CD8-positive, alpha-beta T cell (primary cell): ENCODE measurements at regions of chr17 and their contacts with region 1.

Region 1: DNA sequence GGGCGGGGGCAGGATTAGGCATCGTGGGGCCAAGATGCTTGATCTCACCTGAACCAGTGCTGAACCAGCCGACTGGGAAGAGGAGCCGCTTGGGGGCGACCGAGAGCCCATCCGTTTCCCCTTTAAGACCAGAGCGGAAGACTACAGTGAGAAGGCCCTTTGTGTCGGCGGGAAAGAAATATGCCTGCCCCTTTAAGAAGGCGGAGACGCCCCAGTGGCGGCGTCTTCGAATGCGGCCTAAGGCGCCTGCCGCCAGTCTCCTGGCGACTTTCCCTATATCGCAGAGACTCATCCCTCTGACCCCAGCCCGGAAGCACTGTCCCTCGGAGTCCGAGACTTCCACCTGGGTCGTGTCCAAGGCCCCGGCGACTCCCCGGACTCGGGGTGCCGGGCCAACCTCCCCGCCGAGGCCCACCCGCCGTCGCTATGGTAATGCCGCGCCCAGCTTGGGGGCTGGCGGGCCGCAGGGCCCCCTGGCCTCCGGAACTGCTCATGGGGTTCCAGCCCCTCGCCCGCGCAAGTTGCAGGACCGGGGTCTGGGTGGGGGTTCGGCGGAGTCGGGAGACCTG is at the start of gene HROB:
- DNase-seq: peak; percentile 95 to 99 (median 98)
- ATAC-seq: peak; percentile 91
- H3K4me3 ChIP-seq: peak within 1 kb of the TSS; percentile 62 to 80
- H3K4me3 Mint-ChIP-seq: peak within 1 kb of the TSS; percentile 84
- H3K27ac ChIP-seq: peak within 1 kb of the TSS; percentile 49 to 78
- H3K27ac Mint-ChIP-seq: peak within 1 kb of the TSS; percentile 49
- H3K4me1 ChIP-seq: peaks cover 11% of the 10 kb centered on the region
- H3K4me1 Mint-ChIP-seq: peaks cover 10% of the 10 kb centered on the region
- H3K27me3 ChIP-seq: peaks cover 0 to 14% of the 10 kb centered on the region in 2 experiments
- H3K27me3 Mint-ChIP-seq: peaks cover 10% of the 10 kb centered on the region
- CTCF ChIP-seq: peak; percentile 75
- total RNA-seq, gene HROB: 4.0 to 4.9 TPM

Region 2: GRCh38 chr17:43952717-43953666 is 188.8 kb before region 1 on chr17:
- CTCF ChIA-PET with region 1: no interaction called
- POLR2A ChIA-PET with region 1: no interaction called
- intact Hi-C with region 1: no loop called
- DNase-seq: no peak
- ATAC-seq: no peak
- H3K4me3 ChIP-seq: no peak overlapping the region
- H3K4me3 Mint-ChIP-seq: peak overlapping the region; percentile 29
- H3K27ac ChIP-seq: no peak overlapping the region
- H3K27ac Mint-ChIP-seq: no peak overlapping the region
- H3K4me1 ChIP-seq: no peaks in the 10 kb centered on the region
- H3K4me1 Mint-ChIP-seq: no peaks in the 10 kb centered on the region
- H3K27me3 ChIP-seq: peaks cover 12 to 27% of the 10 kb centered on the region in 2 experiments
- H3K27me3 Mint-ChIP-seq: peaks cover 48% of the 10 kb centered on the region
- CTCF ChIP-seq: no peak

Region 3: DNA sequence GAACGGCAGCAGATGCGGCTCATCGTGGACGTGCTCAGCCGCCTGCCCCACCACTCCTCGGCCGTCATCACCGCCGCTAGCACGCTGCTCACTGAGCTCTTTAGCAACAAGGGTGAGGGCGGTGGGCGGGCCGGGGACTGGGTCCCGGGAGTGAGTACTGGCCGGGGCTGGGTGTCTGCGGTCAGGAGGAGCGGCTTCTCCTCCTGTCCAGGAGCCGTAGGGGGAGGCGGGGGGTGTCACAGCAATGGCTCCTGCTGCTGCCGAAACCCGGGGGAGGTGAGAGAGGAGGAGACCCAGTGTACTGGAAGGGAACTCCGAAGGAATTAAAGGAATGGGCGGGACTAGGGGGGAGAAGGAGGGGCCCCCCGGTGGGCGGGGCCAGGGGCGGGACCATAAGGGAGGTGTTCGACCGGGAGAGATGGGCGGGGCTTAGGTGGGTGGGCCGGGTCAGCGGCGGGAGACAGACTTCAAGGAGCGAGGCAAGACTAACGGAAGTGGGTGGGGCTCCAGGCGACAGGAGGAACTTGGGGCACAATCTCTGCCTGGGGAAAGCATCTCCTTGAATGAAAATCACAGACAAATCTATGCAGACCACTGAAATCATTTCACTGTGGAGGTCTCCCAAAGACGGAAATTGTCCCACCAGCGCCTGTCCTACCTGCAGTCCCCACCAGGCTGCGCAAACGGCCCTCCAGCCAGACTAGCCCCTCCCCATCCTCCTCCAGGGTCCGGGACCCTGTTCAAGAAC is 135.0 kb before region 1 on chr17:
- CTCF ChIA-PET with region 1: no interaction called
- POLR2A ChIA-PET with region 1: no interaction called
- intact Hi-C with region 1: loop called in 1 of 2 experiments (anchors 2 kb)
- DNase-seq: peak; percentile 91 to 99 (median 97)
- ATAC-seq: peak; percentile 88
- H3K4me3 ChIP-seq: peak overlapping the region; percentile 50 to 60
- H3K4me3 Mint-ChIP-seq: peak overlapping the region; percentile 88
- H3K27ac ChIP-seq: peak overlapping the region in 1 of 2 experiments; percentile 22
- H3K27ac Mint-ChIP-seq: no peak overlapping the region
- H3K4me1 ChIP-seq: peaks cover 30% of the 10 kb centered on the region
- H3K4me1 Mint-ChIP-seq: peaks cover 21% of the 10 kb centered on the region
- H3K27me3 ChIP-seq: peaks cover 0 to 17% of the 10 kb centered on the region in 2 experiments
- H3K27me3 Mint-ChIP-seq: peaks cover 5% of the 10 kb centered on the region
- CTCF ChIP-seq: no peak

Region 4: DNA sequence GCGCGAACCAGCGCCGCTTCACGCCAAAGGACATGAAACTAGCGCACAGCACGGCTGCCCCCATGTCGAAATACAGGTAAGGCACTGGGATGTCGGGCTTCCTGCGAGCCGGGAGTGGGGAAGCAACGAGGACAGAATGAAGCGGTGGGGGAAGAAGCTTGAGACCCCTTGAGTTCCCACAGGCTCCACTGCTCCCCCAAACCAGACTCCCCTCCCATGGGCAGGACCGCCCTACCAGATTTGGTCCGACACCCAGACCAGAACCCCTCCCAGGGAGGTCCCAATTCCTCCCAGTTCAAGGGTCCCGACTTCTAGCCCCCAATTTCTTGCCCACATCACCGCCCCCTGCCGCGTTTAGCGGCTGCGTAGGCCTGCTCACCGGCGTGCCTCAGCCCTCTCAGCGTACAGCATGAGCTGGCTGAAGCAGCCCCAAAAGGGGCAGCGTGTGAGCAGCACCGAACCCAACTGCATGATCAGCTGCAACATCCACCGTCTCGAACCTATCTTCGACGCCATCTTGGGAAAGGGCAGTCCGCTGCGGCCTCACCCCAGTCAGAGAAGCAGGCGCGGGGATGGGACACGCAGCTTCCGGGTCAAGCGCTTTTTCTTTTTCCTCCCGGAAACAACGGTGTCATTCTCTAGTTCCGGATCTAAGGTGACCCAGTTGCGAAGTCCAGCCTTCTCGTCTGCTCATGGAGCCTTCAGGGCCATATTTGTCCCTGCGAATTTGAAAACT is 127.2 kb before region 1 on chr17 and contains the start of gene TMEM101:
- CTCF ChIA-PET with region 1: no interaction called
- POLR2A ChIA-PET with region 1: no interaction called
- intact Hi-C with region 1: loop called in 1 of 2 experiments (anchors 2 kb)
- DNase-seq: peak; percentile 79 to 95 (median 90)
- ATAC-seq: peak; percentile 99
- H3K4me3 ChIP-seq: peak within 1 kb of the TSS; percentile 81 to 91
- H3K4me3 Mint-ChIP-seq: peak within 1 kb of the TSS; percentile 100
- H3K27ac ChIP-seq: peak within 1 kb of the TSS; percentile 51 to 55
- H3K27ac Mint-ChIP-seq: peak within 1 kb of the TSS; percentile 95
- H3K4me1 ChIP-seq: peaks cover 11% of the 10 kb centered on the region
- H3K4me1 Mint-ChIP-seq: peaks cover 10% of the 10 kb centered on the region
- H3K27me3 ChIP-seq: no peaks in the 10 kb centered on the region
- H3K27me3 Mint-ChIP-seq: no peaks in the 10 kb centered on the region
- CTCF ChIP-seq: no peak
- total RNA-seq, gene TMEM101: 8.1 to 8.7 TPM

Region 5: DNA sequence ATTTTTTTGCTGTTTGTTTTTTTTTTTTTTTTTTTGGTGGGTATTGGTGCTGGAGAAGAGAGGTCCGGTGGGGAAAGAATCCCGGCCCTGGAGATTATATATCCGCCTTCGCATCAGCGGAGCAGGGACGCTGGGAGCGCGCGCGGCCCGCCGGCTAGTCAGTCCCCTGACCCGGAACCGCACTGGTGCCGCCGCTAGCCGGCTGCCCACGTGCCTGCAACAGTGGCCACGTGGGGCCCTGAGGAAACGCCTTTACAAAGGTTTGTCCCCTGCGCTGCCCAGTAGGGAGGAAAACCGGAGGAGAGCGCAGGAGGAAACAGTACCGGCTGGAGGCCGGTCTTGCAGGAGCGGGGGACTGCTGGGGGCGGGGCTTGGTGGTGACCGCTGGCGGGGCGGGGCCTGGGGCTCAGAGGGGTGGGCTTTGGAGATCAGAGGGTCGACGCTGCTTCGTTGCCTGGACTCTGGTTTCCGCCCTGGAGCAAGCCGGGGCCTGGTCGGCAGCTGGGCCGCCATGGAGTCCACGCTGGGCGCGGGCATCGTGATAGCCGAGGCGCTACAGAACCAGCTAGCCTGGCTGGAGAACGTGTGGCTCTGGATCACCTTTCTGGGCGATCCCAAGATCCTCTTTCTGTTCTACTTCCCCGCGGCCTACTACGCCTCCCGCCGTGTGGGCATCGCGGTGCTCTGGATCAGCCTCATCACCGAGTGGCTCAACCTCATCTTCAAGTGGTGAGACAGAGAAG is 71.2 kb before region 1 on chr17 and contains the start of gene G6PC3:
- CTCF ChIA-PET with region 1: no interaction called
- POLR2A ChIA-PET with region 1: no interaction called
- intact Hi-C with region 1: loop called in 1 of 2 experiments (anchors 5 kb)
- DNase-seq: peak; percentile 30 to 88 (median 75)
- ATAC-seq: peak; percentile 55
- H3K4me3 ChIP-seq: peak within 1 kb of the TSS; percentile 70 to 84
- H3K4me3 Mint-ChIP-seq: peak within 1 kb of the TSS; percentile 96
- H3K27ac ChIP-seq: peak within 1 kb of the TSS; percentile 62 to 80
- H3K27ac Mint-ChIP-seq: peak within 1 kb of the TSS; percentile 94
- H3K4me1 ChIP-seq: peaks cover 23% of the 10 kb centered on the region
- H3K4me1 Mint-ChIP-seq: peaks cover 34% of the 10 kb centered on the region
- H3K27me3 ChIP-seq: no peaks in the 10 kb centered on the region
- H3K27me3 Mint-ChIP-seq: no peaks in the 10 kb centered on the region
- CTCF ChIP-seq: no peak
- total RNA-seq, gene G6PC3: 4.8 to 5.9 TPM

Region 6: DNA sequence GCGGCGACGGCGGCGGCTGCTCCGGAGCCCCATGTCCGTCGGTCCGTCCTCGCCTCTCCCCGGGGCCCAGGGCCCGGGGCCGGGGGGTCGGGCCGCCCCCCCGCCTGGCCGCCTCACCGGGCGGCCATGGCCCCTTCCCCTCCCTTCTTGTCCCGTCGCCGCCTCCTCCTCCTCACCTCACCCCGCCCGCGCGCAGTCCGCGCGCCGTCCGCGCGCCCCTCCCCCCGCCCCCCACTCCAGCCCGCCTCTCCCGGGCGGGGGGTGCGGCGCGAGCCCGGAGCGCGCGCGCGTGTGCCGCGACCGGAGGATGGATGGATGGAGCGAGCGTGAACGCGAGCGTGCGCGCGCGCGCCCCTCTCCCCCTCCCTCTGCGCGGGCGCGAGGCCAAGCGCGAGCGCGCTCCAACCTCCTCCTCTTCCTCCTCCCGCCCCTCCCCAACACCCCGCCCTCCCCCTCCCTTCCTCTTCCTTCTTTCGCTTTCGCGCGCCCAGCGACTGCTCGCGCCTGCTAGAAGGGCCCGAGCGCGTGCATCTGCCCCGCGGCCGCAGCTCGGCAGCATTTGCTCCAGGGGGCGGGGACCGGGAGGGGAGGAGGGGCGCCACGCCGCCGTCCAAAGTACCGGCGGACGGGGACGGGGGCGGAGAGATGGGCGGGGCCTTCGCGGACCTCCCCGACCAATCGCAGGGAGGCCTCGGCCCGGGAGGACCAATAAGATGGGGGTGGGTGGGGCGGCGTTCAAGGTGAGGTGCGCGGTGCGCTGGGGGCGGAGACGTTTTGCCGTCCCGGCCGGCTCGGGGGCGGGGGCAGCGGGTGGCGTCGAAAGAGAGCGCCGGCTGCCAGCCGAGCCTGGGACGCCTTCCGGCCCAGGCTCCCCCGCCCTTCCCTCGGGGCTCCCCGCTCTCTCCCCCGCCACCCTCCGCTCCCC is 58.0 kb after region 1 on chr17 and contains the start of gene ATXN7L3:
- CTCF ChIA-PET with region 1: no interaction called
- POLR2A ChIA-PET with region 1: no interaction called
- intact Hi-C with region 1: loop called (anchors 1 to 2 kb)
- DNase-seq: peak; percentile 99 to 100 (median 99)
- ATAC-seq: peak; percentile 84
- H3K4me3 ChIP-seq: peak within 1 kb of the TSS; percentile 84 to 96
- H3K4me3 Mint-ChIP-seq: peak within 1 kb of the TSS; percentile 86
- H3K27ac ChIP-seq: peak within 1 kb of the TSS; percentile 69 to 92
- H3K27ac Mint-ChIP-seq: peak within 1 kb of the TSS; percentile 93
- H3K4me1 ChIP-seq: peaks cover 36% of the 10 kb centered on the region
- H3K4me1 Mint-ChIP-seq: peaks cover 43% of the 10 kb centered on the region
- H3K27me3 ChIP-seq: no peaks in the 10 kb centered on the region
- H3K27me3 Mint-ChIP-seq: no peaks in the 10 kb centered on the region
- CTCF ChIP-seq: no peak
- total RNA-seq, gene ATXN7L3: 85.5 to 85.7 TPM

Region 7: GRCh38 chr17:44324571-44325275 is 182.9 kb after region 1 on chr17 and contains the start of gene SLC25A39:
- CTCF ChIA-PET with region 1: interaction called, 3 read pairs
- POLR2A ChIA-PET with region 1: no interaction called
- intact Hi-C with region 1: loop called in 1 of 2 experiments (anchors 1 kb)
- DNase-seq: peak; percentile 90 to 98 (median 96)
- ATAC-seq: peak; percentile 72
- H3K4me3 ChIP-seq: peak within 1 kb of the TSS; percentile 84 to 91
- H3K4me3 Mint-ChIP-seq: peak within 1 kb of the TSS; percentile 88
- H3K27ac ChIP-seq: peak within 1 kb of the TSS; percentile 88 to 93
- H3K27ac Mint-ChIP-seq: peak within 1 kb of the TSS; percentile 96
- H3K4me1 ChIP-seq: peaks cover 14% of the 10 kb centered on the region
- H3K4me1 Mint-ChIP-seq: peaks cover 30% of the 10 kb centered on the region
- H3K27me3 ChIP-seq: no peaks in the 10 kb centered on the region
- H3K27me3 Mint-ChIP-seq: no peaks in the 10 kb centered on the region
- CTCF ChIP-seq: no peak
- total RNA-seq, gene SLC25A39: 73.1 to 77.7 TPM

Region 8: DNA sequence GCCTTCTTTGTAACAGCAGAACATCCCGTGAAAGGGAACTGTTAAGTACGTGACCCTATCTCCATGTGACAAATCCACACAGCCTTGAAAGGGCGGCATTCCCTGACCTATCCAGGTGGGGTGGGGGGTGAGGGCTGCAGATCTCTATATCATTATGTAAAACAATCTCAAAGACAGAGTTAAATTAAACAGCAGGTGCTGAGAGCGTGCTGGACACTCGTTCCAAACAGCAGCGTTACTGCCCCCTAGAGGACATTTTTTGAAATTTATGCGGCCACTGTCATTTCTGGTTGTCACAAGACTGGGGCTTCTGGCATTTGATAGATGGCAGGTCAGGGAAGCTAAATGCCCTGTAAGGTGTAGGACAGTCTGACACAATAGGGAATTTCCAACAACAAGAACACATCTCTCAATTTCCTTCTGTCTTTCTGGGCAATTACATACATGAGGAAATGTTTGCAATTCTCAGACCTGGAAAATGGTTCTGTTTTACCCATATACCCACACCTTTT is 189.5 kb after region 1 on chr17:
- CTCF ChIA-PET with region 1: interaction called, 3 read pairs
- POLR2A ChIA-PET with region 1: interaction called, 3 read pairs
- intact Hi-C with region 1: loop called (anchors 1 kb)
- DNase-seq: peak; percentile 45 to 85 (median 75)
- ATAC-seq: no peak
- H3K4me3 ChIP-seq: no peak overlapping the region
- H3K4me3 Mint-ChIP-seq: no peak overlapping the region
- H3K27ac ChIP-seq: no peak overlapping the region
- H3K27ac Mint-ChIP-seq: no peak overlapping the region
- H3K4me1 ChIP-seq: peaks cover 4% of the 10 kb centered on the region
- H3K4me1 Mint-ChIP-seq: peaks cover 12% of the 10 kb centered on the region
- H3K27me3 ChIP-seq: no peaks in the 10 kb centered on the region
- H3K27me3 Mint-ChIP-seq: no peaks in the 10 kb centered on the region
- CTCF ChIP-seq: peak; percentile 89